K562 (cell line): ENCODE measurements at regions of chr5 and their contacts with region 1.

Region 1: DNA sequence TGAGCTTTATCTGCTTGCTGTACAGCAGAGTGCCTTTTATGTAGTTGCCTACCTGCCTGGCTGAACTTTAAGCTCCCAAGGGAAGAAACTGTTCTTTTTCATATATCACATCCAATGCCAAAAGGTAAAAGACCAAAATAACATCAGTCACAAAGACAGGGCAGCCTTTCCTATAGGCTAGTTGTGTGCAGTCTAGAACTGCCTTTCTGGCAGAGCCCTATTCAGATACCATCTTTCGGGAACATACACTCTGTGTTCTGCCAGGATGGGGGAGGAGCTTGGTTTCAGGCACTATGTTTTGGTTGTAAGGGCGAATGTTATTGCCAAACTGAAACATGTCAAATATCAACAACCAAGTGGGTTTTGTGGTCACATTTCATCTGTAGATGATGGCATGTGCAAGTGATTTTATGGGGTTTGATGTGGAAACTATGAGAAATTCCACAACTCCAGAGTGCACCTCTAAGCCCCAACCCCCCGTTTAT is 314.5 kb downstream of the ADGRV1 start:
- DNase-seq: no peak
- ATAC-seq: no peak; the same call in 2 of the 3 replicates
- H3K4me3 ChIP-seq: no peak overlapping the region
- H3K27ac ChIP-seq: no peak overlapping the region
- H3K4me1 ChIP-seq: 0 out of 5 replicates have a peak, but pooled peaks cover 0 to under 1% of the 10 kb centered on the region in 2 experiments
- H3K27me3 ChIP-seq: no peaks in the 10 kb centered on the region
- CTCF ChIP-seq: no peak
- EP300 ChIP-seq: no peak
- POLR2A ChIP-seq: no peak
- RAD21 ChIP-seq: no peak

Region 2: GRCh38 chr5:91090995-91091394 is 217.9 kb after region 1 on chr5:
- CTCF ChIA-PET with region 1: no interaction called
- POLR2A ChIA-PET with region 1: no interaction called
- in situ Hi-C with region 1: loop called (anchors 5 kb)
- intact Hi-C with region 1: no loop called
- DNase-seq: no peak
- ATAC-seq: no peak
- H3K4me3 ChIP-seq: no peak overlapping the region
- H3K27ac ChIP-seq: no peak overlapping the region
- H3K4me1 ChIP-seq: no peaks in the 10 kb centered on the region; a peak in 1 of 5 replicates
- H3K27me3 ChIP-seq: no peaks in the 10 kb centered on the region
- CTCF ChIP-seq: no peak
- EP300 ChIP-seq: no peak
- POLR2A ChIP-seq: no peak
- RAD21 ChIP-seq: no peak